ENCODE measurements at regions of chr14 and their contacts with region 1.

Region 1: DNA sequence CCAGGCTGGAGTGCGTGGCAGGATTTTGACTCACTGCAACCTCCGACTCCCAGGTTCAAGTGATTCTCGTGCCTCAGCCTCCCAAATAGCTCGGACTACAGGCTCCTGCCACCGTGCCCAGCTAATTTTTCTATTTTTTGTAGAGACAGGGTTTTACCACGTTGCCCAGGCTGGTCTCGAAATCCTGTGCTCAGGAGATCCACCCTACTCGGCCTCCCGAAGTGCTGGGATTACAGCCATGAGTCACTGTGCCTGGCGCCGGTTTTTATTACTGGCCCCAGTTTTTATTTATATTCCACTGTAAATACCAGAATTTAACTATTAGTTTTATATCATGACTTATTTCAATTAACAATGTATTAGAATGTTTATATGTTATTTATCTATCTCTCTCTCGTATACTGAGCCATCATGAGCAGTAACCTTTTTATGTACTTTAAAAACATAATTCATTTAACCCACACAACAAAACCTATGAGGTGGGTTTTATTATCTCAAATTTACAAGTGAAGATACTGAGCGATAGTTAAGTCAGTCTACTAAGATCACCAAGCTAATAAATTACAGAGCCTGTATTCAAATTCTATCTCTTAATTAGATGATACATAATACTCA is 47.8 kb downstream of the HECTD1 start:
- DNase-seq: no peak
- ATAC-seq: peak in 2 of 4 donors; percentile 30 to 35
- H3K4me3 ChIP-seq: no peak overlapping the region
- H3K27ac ChIP-seq: no peak overlapping the region
- H3K4me1 ChIP-seq: peaks cover 3% of the 10 kb centered on the region
- H3K27me3 ChIP-seq: no peaks in the 10 kb centered on the region
- CTCF ChIP-seq: no peak

Region 2: GRCh38 chr14:31122098-31122611 is 37.6 kb before region 1 on chr14:
- intact Hi-C with region 1: loop called in 1 of 2 experiments (anchors 5 kb)
- DNase-seq: no peak
- ATAC-seq: peak in 3 of 4 donors; percentile 29 to 55 (median 38)
- H3K4me3 ChIP-seq: no peak overlapping the region
- H3K27ac ChIP-seq: no peak overlapping the region
- H3K4me1 ChIP-seq: peaks cover 16% of the 10 kb centered on the region
- H3K27me3 ChIP-seq: no peaks in the 10 kb centered on the region
- CTCF ChIP-seq: no peak

Measured in psoas muscle (tissue), 8 donors.